WTC11 (cell line): ENCODE measurements at regions of chr7 and their contacts with region 1.

Region 1: GRCh38 chr7:13990984-13991790 is 1.7 kb upstream of the ETV1 start:
- DNase-seq: peak; percentile 98
- ATAC-seq: peak; percentile 84
- H3K4me3 Mint-ChIP-seq: no peak overlapping the region
- H3K27ac Mint-ChIP-seq: no peak overlapping the region
- H3K4me1 Mint-ChIP-seq: peaks cover 16% of the 10 kb centered on the region
- H3K27me3 Mint-ChIP-seq: no peaks in the 10 kb centered on the region
- CTCF ChIP-seq: no peak

Region 2: GRCh38 chr7:13981070-13981469 is 10.1 kb before region 1 on chr7:
- CTCF ChIA-PET with region 1: interaction called, 6 read pairs
- POLR2A ChIA-PET with region 1: interaction called, 33 read pairs
- DNase-seq: no peak
- ATAC-seq: peak; percentile 74
- H3K4me3 Mint-ChIP-seq: peak overlapping the region; percentile 40
- H3K27ac Mint-ChIP-seq: peak overlapping the region; percentile 87
- H3K4me1 Mint-ChIP-seq: peaks cover 80% of the 10 kb centered on the region
- H3K27me3 Mint-ChIP-seq: no peaks in the 10 kb centered on the region
- CTCF ChIP-seq: no peak

Region 3: GRCh38 chr7:14069961-14070360 is 78.8 kb after region 1 on chr7:
- CTCF ChIA-PET with region 1: no interaction called
- POLR2A ChIA-PET with region 1: no interaction called
- DNase-seq: no peak
- ATAC-seq: no peak
- H3K4me3 Mint-ChIP-seq: no peak overlapping the region
- H3K27ac Mint-ChIP-seq: no peak overlapping the region
- H3K4me1 Mint-ChIP-seq: peaks cover 9% of the 10 kb centered on the region
- H3K27me3 Mint-ChIP-seq: no peaks in the 10 kb centered on the region
- CTCF ChIP-seq: no peak